ENCODE measurements at regions of chr4 and their contacts with region 1.

Region 1: GRCh38 chr4:123421227-123421936 is 24.8 kb downstream of the SPRY1 start:
- DNase-seq: no peak
- H3K4me3 Mint-ChIP-seq: peak overlapping the region; percentile 52
- H3K27ac Mint-ChIP-seq: peak overlapping the region; percentile 72
- H3K4me1 Mint-ChIP-seq: peaks cover 39% of the 10 kb centered on the region
- H3K27me3 Mint-ChIP-seq: peaks cover 1% of the 10 kb centered on the region

Region 2: GRCh38 chr4:123250843-123251242 is 170.5 kb before region 1 on chr4:
- CTCF ChIA-PET with region 1: no interaction called
- POLR2A ChIA-PET with region 1: no interaction called
- intact Hi-C with region 1: no loop called
- DNase-seq: no peak
- H3K4me3 Mint-ChIP-seq: no peak overlapping the region
- H3K27ac Mint-ChIP-seq: no peak overlapping the region
- H3K4me1 Mint-ChIP-seq: no peaks in the 10 kb centered on the region
- H3K27me3 Mint-ChIP-seq: no peaks in the 10 kb centered on the region

Region 3: DNA sequence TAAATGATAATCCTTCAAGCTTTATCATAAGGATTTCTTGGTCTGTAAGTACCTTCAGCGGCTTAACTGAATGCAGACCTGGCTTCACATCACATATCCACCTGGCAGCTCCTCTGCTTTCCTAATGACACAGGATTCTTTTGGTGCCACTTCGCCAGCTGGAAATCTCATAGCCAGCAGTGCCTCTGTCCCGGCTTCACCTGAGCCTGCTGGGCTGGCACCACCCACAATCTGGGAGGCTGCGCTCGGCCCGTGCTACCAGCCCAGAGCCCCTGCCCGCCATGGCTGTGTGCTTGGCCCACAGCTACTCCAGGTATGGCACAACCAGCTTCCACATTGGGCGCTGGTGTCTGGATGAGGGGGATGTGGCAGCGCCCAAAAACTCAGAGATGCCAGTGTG is 12.6 kb after region 1 on chr4:
- CTCF ChIA-PET with region 1: no interaction called
- POLR2A ChIA-PET with region 1: no interaction called
- intact Hi-C with region 1: no loop called
- DNase-seq: no peak
- H3K4me3 Mint-ChIP-seq: no peak overlapping the region
- H3K27ac Mint-ChIP-seq: no peak overlapping the region
- H3K4me1 Mint-ChIP-seq: peaks cover 3% of the 10 kb centered on the region
- H3K27me3 Mint-ChIP-seq: peaks cover 2% of the 10 kb centered on the region

Region 4: GRCh38 chr4:123444290-123444731 is 22.9 kb after region 1 on chr4:
- CTCF ChIA-PET with region 1: no interaction called
- POLR2A ChIA-PET with region 1: no interaction called
- intact Hi-C with region 1: loop called (anchors 1 kb)
- DNase-seq: peak; percentile 37
- H3K4me3 Mint-ChIP-seq: no peak overlapping the region
- H3K27ac Mint-ChIP-seq: peak overlapping the region; percentile 47
- H3K4me1 Mint-ChIP-seq: peaks cover 14% of the 10 kb centered on the region
- H3K27me3 Mint-ChIP-seq: peaks cover 6% of the 10 kb centered on the region

Region 5: GRCh38 chr4:123477711-123478209 is 56.4 kb after region 1 on chr4:
- CTCF ChIA-PET with region 1: no interaction called
- POLR2A ChIA-PET with region 1: no interaction called
- intact Hi-C with region 1: loop called (anchors 2 kb)
- DNase-seq: peak; percentile 73
- H3K4me3 Mint-ChIP-seq: no peak overlapping the region
- H3K27ac Mint-ChIP-seq: no peak overlapping the region
- H3K4me1 Mint-ChIP-seq: peaks cover 8% of the 10 kb centered on the region
- H3K27me3 Mint-ChIP-seq: no peaks in the 10 kb centered on the region

Region 6: DNA sequence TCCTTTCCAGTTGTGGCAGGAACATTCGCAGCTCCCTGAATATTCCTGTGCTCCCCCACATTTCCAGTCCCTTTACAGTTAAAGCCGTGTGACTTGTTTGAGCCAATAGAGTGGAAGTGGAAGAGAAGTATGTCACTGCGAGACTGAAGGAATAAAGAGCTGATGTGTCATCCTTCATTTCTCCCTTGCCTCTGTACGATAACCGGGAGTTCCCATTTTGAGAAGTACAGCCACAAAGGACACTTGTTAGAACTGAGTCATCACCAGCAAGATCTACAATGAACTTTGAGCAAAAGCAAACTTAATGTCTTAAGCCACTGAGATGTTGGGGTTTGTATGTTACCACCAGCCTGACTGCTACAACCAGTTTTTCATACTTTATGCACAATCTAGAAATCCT is 67.5 kb after region 1 on chr4:
- CTCF ChIA-PET with region 1: no interaction called
- POLR2A ChIA-PET with region 1: no interaction called
- intact Hi-C with region 1: loop called (anchors 2 kb)
- DNase-seq: no peak
- H3K4me3 Mint-ChIP-seq: no peak overlapping the region
- H3K27ac Mint-ChIP-seq: no peak overlapping the region
- H3K4me1 Mint-ChIP-seq: peaks cover 5% of the 10 kb centered on the region
- H3K27me3 Mint-ChIP-seq: peaks cover 4% of the 10 kb centered on the region

Region 7: GRCh38 chr4:123547216-123548165 is 126.1 kb after region 1 on chr4:
- CTCF ChIA-PET with region 1: no interaction called
- POLR2A ChIA-PET with region 1: no interaction called
- intact Hi-C with region 1: no loop called
- DNase-seq: no peak
- H3K4me3 Mint-ChIP-seq: no peak overlapping the region
- H3K27ac Mint-ChIP-seq: no peak overlapping the region
- H3K4me1 Mint-ChIP-seq: no peaks in the 10 kb centered on the region
- H3K27me3 Mint-ChIP-seq: peaks cover 3% of the 10 kb centered on the region

Region 8: DNA sequence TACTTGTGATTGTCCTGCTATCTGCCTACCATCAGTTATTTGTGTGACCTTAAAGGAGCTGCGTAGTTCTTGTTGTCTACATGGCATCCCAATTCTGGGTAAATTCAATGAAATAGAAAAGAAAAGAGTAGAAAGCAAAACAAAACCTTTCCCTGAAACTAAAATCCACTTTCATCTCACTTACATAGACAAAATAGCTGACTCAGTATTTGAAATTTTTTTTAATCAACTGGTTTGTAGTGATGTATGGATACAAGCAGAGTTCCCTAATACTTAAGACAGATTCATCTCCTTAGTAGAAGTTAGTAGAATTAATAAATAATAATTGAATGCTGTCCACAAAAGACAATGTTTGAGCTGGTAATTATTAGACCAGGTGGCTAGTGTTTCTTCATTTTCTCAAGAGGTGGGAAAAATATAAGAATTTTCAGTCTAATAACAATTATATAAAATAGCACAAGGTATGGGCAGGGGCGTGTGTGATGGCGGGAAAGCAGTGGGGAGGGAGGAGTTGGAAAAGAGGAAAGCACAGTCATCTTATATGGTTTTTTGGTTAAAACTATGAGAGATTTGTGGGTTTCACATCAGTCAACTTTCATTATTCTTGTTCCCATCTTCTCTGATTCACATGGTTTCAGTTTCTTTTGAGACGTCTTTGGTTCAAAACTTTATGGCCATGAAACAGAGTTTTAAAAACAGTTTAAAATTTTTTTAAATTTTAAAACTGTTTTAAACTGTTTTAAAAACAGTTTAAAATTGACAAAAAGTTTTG is 250.4 kb after region 1 on chr4:
- CTCF ChIA-PET with region 1: no interaction called
- POLR2A ChIA-PET with region 1: no interaction called
- intact Hi-C with region 1: loop called (anchors 1 kb)
- DNase-seq: peak; percentile 55
- H3K4me3 Mint-ChIP-seq: no peak overlapping the region
- H3K27ac Mint-ChIP-seq: no peak overlapping the region
- H3K4me1 Mint-ChIP-seq: peaks cover 21% of the 10 kb centered on the region
- H3K27me3 Mint-ChIP-seq: peaks cover 42% of the 10 kb centered on the region

Region 9: DNA sequence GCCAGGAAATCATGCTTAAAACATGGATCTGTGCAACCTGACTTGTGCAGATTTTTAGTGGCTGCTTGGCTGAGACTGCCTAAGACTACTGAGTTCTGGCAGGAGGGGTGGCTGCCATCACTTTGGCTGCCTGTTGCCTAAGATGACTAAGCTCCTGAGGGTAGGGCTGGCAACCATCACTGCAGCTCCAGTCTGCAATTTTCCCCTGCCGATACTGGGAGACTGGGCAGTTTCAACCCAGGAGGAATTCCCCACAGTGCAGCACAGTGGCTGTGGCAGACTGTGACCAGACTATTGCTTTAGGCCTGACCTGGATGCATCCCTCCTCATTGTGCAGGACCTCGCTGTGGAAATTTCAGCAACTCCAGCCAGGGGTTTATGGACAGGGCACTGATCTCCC is 746.2 kb after region 1 on chr4:
- CTCF ChIA-PET with region 1: no interaction called
- POLR2A ChIA-PET with region 1: no interaction called
- intact Hi-C with region 1: no loop called
- DNase-seq: no peak
- H3K4me3 Mint-ChIP-seq: no peak overlapping the region
- H3K27ac Mint-ChIP-seq: no peak overlapping the region
- H3K4me1 Mint-ChIP-seq: no peaks in the 10 kb centered on the region
- H3K27me3 Mint-ChIP-seq: no peaks in the 10 kb centered on the region